Cardiac septum (tissue), 1 donor: ENCODE measurements at regions of chr3 and their contacts with region 1.

Region 1: DNA sequence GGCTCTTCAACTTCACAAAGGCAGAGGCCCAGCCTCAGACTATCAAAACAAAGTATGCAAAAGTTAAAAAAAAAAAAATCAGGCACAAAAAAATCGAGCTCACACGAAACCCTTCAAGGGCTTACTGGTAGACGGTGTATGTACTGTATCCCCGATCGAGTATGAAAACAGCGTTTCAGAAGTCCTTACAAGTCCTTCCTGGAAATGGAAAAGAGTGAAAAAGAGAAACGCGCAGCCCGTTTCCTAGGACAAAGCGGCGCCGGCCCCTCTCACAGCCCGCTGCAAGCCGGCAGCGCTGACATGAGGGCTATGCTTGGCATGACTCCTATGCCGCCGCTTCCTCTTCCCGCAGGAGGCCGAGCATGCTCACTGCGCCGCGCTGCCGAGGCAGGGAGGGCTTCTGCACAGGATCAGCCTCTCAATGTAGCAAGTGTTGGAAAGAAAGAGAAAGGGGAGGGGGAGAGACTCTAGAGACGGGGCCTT is at the start of gene VGLL4:
- DNase-seq: peak; percentile 97
- total RNA-seq, gene VGLL4: 40.7 TPM

Region 2: GRCh38 chr3:11392014-11392859 is 251.4 kb before region 1 on chr3:
- intact Hi-C with region 1: loop called (anchors 5 kb)
- DNase-seq: no peak

Region 3: DNA sequence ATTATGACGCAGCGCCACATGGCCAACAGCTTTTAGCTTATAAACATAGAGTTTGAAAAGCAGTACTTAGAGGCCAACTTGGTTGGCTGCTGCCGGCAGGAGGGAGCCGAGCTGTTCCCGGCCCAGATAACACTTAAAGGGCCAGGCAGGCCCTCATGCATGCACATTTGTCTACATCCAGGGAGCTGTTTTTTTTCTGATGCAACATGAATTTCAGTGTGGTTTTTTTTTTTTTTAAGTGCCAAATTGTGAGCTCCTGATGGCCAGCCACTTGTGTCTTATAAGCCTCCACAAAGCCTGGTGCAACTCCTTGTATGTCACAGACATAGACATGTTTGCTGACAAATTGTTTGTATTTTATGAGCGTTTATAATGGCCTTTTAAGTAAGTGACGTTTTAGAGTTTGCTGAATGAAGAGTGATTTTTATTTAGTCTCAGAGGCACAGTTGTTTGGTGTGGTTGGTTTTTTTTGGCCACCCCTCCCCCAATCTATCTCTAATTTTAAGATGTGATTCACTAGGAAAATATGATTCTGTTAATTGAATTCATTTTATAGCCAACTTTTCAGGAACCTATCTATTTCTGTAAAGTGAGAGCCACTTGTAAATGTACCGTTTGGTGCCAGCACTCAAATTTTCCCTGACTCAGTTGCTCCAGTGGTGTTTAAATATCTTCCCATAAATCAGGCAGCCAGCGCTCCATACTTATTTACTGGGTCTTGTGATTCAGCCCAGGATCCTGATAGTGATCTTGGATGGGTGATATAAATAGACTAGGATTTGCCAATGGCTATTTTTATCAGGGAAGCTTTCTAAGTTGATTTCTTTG is 134.3 kb before region 1 on chr3:
- intact Hi-C with region 1: loop called (anchors 2 kb)
- DNase-seq: peak; percentile 85

Region 4: GRCh38 chr3:11568503-11569155 is 75.0 kb before region 1 on chr3:
- intact Hi-C with region 1: loop called (anchors 1 kb)
- DNase-seq: peak; percentile 92

Region 5: DNA sequence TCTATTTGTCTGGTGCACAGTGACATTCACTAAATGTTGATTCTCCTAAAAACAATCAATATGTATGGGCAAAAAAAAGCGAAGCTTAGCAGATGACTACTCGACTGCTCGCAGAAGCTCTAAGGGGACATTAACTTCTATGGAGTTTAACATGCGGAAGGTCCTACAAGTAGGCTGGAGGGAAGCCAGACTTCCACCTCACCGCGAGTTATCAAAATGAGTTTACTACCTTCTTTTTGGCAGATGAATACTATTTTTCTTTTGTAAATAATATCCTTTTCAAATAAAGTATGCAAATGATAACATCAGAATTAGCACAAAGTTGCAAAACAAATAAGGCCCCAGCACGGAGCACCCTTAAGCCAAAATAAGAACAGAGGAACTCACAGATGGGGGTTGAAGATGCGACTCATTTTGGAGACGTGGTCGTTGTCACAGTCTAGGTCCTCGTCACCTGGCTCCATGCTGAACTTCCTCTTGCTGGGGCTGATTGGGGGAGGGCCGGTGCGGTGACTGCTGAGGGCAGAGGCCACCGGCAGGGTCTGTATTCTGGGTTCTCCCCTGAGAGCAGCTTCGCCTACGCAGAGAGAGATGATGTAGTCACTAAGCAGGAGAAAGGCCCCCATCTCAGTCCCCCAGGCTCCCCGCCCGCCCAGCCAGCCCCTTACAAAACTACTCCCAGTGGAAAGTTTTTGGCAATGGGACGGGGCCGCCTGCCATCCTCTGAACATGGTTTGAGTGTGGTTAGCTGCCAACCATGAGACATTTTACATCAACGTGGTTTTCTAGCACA is 42.0 kb before region 1 on chr3:
- intact Hi-C with region 1: loop called (anchors 2 kb)
- DNase-seq: no peak